Naive thymus-derived CD8-positive, alpha-beta T cell (primary cell): ENCODE measurements at regions of chr11 and their contacts with region 1.

Region 1: DNA sequence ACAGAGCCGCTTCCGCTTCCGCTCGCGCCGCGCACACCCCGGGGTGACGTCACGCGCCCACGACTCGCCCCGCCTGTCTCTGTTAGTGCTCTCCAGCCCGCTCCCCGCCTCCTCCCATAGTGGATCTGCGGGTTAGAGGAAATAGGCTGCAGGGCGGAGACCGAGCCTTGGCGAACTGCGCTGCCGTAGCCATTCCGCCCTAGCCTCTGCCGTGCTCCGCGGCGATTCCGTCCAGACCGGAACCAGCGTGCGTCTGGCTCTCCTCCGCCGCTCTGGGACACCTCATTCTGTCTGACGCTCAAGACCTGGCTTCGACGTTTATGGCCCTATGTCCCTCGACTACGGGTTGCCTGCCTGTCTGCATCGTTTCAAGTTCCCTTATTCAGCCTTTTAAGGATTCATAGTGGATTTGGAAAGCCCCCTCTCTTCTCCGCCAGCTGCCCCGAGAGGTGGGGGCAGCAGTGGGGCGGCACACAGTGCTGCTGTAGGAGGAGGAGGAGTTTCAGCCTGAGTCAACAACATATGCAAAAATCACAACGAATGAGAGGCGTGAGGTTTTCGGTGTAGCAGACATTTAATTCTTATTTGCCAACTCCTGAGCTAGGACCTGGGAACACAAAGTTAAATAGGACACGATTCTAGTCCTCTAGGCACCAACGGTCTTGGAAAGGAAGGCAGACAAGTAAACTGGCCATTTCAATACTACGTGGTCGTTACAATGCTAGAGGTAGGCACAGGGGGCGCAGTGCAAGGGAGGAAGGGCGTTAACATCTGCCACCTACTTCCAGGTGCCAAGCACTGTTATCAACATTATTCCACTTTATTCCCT is at the start of gene TAF10:
- DNase-seq: peak; percentile 90 to 97 (median 94)
- ATAC-seq: peak; percentile 90 to 92
- H3K4me3 Mint-ChIP-seq: peak within 1 kb of the TSS in 9 of 10 donors; percentile 81 to 95 (median 89)
- H3K27ac Mint-ChIP-seq: peak within 1 kb of the TSS in 8 of 10 donors; percentile 90 to 98 (median 96)
- H3K4me1 Mint-ChIP-seq: peaks cover 27 to 53% (median 30%) of the 10 kb centered on the region in 4 donors
- H3K27me3 Mint-ChIP-seq: no peaks in the 10 kb centered on the region
- polyA plus RNA-seq, gene TAF10: 247 to 332 (median 249) TPM

Region 2: GRCh38 chr11:6481012-6481923 is 131.2 kb before region 1 on chr11 and contains the starts of genes ARFIP2 and TIMM10B:
- POLR2A ChIA-PET with region 1: interaction called, 11 read pairs
- DNase-seq: peak; percentile 87 to 98 (median 96)
- ATAC-seq: peak; percentile 95 to 96
- H3K4me3 Mint-ChIP-seq: peak within 1 kb of the TSS; percentile 93 to 99 (median 96)
- H3K27ac Mint-ChIP-seq: peak within 1 kb of the TSS; percentile 96 to 99 (median 99)
- H3K4me1 Mint-ChIP-seq: peaks cover 26 to 46% (median 43%) of the 10 kb centered on the region in 4 donors
- H3K27me3 Mint-ChIP-seq: no peaks in the 10 kb centered on the region
- polyA plus RNA-seq, gene ARFIP2: 31.1 to 43.8 (median 38.3) TPM
- polyA plus RNA-seq, gene TIMM10B: 30.5 to 42.7 (median 30.9) TPM

Region 3: DNA sequence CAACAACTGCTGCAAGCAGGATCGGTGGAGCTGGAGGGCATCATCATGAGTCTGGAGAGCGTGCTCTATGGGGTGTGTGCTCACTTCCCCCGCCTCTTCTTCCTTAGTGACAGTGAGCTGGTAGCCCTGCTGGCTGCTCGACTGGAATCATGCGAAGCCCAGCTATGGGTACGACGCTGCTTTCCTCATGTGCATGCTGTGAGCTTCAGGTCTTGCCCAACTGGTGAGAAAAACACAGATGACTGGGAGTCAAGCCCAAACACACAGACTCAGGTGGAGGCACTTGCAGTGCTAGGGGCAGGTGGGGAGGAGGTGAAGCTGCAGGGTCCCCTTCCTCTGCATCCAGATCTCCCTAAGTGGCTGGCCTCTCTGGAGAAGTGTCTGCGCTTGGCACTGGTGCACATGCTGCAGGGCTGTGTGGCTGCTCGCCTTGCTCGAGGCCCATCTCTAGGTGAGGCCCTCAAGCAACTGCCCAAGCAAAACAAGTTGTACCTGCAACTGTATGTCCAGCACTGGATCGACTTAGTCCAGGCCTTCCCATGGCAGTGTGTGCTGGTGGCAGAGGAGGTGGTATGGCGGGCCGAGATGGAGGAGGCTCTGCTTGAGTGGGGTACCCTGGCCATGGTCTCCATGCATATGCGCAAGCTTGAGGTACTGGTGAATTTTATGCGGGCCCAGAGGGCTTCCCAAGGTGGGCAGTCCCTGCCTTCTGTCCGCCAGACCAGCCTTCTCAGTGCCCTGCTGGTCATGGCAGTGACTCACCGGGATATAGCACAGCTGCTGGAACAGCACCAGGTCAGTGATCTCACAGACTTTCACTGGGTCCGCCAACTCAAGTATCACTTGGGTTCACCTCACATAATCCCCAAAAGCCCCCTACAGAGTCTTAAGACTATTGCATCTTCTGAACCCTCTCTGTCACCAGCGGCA is 67.2 kb before region 1 on chr11:
- POLR2A ChIA-PET with region 1: no interaction called
- DNase-seq: no peak
- ATAC-seq: no peak
- H3K4me3 Mint-ChIP-seq: no peak overlapping the region
- H3K27ac Mint-ChIP-seq: peak overlapping the region in 2 of 10 donors; percentile 23 to 36
- H3K4me1 Mint-ChIP-seq: peaks cover 0 to 9% (median 4%) of the 10 kb centered on the region in 4 donors
- H3K27me3 Mint-ChIP-seq: no peaks in the 10 kb centered on the region

Region 4: GRCh38 chr11:6556139-6556949 is 56.1 kb before region 1 on chr11:
- POLR2A ChIA-PET with region 1: no interaction called
- DNase-seq: no peak
- ATAC-seq: no peak
- H3K4me3 Mint-ChIP-seq: no peak overlapping the region
- H3K27ac Mint-ChIP-seq: peak overlapping the region in 1 of 10 donors; percentile 52
- H3K4me1 Mint-ChIP-seq: peaks cover 0 to 4% (median 1%) of the 10 kb centered on the region in 4 donors
- H3K27me3 Mint-ChIP-seq: no peaks in the 10 kb centered on the region

Region 5: GRCh38 chr11:6646918-6647679 is 34.7 kb after region 1 on chr11:
- POLR2A ChIA-PET with region 1: interaction called, 38 read pairs
- DNase-seq: peak in 7 of 10 donors; percentile 18 to 45 (median 37)
- ATAC-seq: peak; percentile 73 to 78
- H3K4me3 Mint-ChIP-seq: no peak overlapping the region
- H3K27ac Mint-ChIP-seq: no peak overlapping the region
- H3K4me1 Mint-ChIP-seq: peaks cover 0 to 12% (median 0%) of the 10 kb centered on the region in 4 donors
- H3K27me3 Mint-ChIP-seq: no peaks in the 10 kb centered on the region

Region 6: GRCh38 chr11:6667733-6668374 is 55.4 kb after region 1 on chr11:
- POLR2A ChIA-PET with region 1: interaction called, 13 read pairs
- DNase-seq: peak in 6 of 10 donors; percentile 20 to 55 (median 39)
- ATAC-seq: peak; percentile 74 to 76
- H3K4me3 Mint-ChIP-seq: peak overlapping the region in 5 of 10 donors; percentile 19 to 54 (median 28)
- H3K27ac Mint-ChIP-seq: peak overlapping the region; percentile 6 to 93 (median 66)
- H3K4me1 Mint-ChIP-seq: peaks cover 42 to 70% (median 66%) of the 10 kb centered on the region in 4 donors
- H3K27me3 Mint-ChIP-seq: no peaks in the 10 kb centered on the region

Region 7: GRCh38 chr11:6705905-6706535 is 93.6 kb after region 1 on chr11:
- POLR2A ChIA-PET with region 1: no interaction called
- DNase-seq: peak in 8 of 10 donors; percentile 16 to 65 (median 42)
- ATAC-seq: peak; percentile 50 to 75
- H3K4me3 Mint-ChIP-seq: no peak overlapping the region
- H3K27ac Mint-ChIP-seq: peak overlapping the region; percentile 20 to 88 (median 73)
- H3K4me1 Mint-ChIP-seq: peaks cover 13 to 32% (median 23%) of the 10 kb centered on the region in 4 donors
- H3K27me3 Mint-ChIP-seq: no peaks in the 10 kb centered on the region

Region 8: GRCh38 chr11:6746086-6746618 is 133.7 kb after region 1 on chr11:
- POLR2A ChIA-PET with region 1: interaction called, 16 read pairs
- DNase-seq: peak in 9 of 10 donors; percentile 10 to 66 (median 38)
- ATAC-seq: peak; percentile 85 to 88
- H3K4me3 Mint-ChIP-seq: no peak overlapping the region
- H3K27ac Mint-ChIP-seq: no peak overlapping the region
- H3K4me1 Mint-ChIP-seq: peaks cover 0 to 46% (median 33%) of the 10 kb centered on the region in 4 donors
- H3K27me3 Mint-ChIP-seq: no peaks in the 10 kb centered on the region